Activated B cell treated with CpG ODN at 0.5 μM for 24 hours (primary cell): ENCODE measurements at regions of chrX and their contacts with region 1.

Region 1: GRCh38 chrX:153927922-153928760 is 2.1 kb upstream of the ARHGAP4 start:
- DNase-seq: peak; percentile 83
- ATAC-seq: peak; percentile 66
- H3K4me3 Mint-ChIP-seq: peak overlapping the region; percentile 87
- H3K27ac Mint-ChIP-seq: peak overlapping the region; percentile 96
- H3K4me1 Mint-ChIP-seq: peaks cover 46% of the 10 kb centered on the region
- H3K27me3 Mint-ChIP-seq: no peaks in the 10 kb centered on the region
- CTCF ChIP-seq: no peak

Region 2: DNA sequence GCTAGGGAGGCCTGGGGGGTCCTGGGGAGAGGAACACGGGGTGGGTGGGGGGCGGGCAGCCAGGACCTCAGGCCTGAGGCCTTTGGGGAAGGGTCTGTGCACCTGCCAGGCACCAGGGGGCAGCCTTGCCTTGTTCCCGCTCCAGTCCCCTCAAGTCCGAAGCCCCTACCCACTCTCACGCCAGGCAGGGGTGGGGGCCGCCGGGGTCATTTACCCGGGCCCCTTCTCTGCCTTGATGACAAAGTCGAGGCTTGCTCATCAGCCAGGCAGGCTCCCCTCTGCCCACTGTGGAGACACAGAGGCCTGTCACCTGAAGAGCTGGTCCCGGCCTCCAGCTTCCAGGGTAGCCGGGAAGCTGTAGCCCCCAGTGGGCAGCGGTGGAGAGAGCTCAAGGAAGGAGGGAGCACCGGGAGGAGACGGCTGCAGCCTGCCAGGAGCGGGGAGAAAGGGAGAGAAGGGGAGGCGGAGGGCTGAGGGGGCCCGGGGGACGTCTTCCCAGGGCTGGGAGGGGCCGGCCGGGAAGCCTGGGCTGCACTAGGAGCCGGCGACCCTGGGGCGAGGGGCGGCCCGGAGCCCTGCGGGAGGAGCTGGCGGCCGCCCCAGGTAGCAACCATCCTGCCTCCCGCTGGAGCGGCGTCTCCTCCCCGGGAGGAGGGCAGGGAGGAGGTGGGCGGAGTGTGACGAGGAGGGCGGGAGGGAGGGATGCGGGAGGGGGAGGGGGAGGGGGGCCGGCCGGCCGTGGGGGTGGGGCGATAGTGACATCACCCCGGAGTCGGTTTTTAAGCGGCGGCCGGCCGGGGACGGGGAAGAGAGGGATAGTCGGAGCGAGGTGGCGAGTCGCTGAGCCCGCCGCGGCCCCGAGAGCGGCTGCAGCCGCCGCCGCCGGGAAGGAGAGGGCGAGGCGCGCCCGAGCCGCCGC is 240.8 kb before region 1 on chrX and contains the start of gene SLC6A8:
- CTCF ChIA-PET with region 1: no interaction called
- POLR2A ChIA-PET with region 1: no interaction called
- intact Hi-C with region 1: no loop called
- DNase-seq: peak; percentile 34
- ATAC-seq: peak; percentile 68
- H3K4me3 Mint-ChIP-seq: peak within 1 kb of the TSS; percentile 83
- H3K27ac Mint-ChIP-seq: no peak within 1 kb of the TSS
- H3K4me1 Mint-ChIP-seq: no peaks in the 10 kb centered on the region
- H3K27me3 Mint-ChIP-seq: peaks cover 3% of the 10 kb centered on the region
- CTCF ChIP-seq: no peak
- total RNA-seq, gene SLC6A8: 0.81 and 1.2 TPM in 2 replicates

Region 3: GRCh38 chrX:153794018-153794896 is 133.9 kb before region 1 on chrX and contains the starts of genes IDH3G and SSR4:
- CTCF ChIA-PET with region 1: no interaction called
- POLR2A ChIA-PET with region 1: interaction called, 52 read pairs
- intact Hi-C with region 1: loop called (anchors 1 kb)
- DNase-seq: peak; percentile 84
- ATAC-seq: peak; percentile 91
- H3K4me3 Mint-ChIP-seq: peak within 1 kb of the TSS; percentile 94
- H3K27ac Mint-ChIP-seq: peak within 1 kb of the TSS; percentile 92
- H3K4me1 Mint-ChIP-seq: peaks cover 19% of the 10 kb centered on the region
- H3K27me3 Mint-ChIP-seq: no peaks in the 10 kb centered on the region
- CTCF ChIP-seq: no peak
- total RNA-seq, gene IDH3G: 58.5 and 60.3 TPM in 2 replicates
- total RNA-seq, gene SSR4: 160 and 175 TPM in 2 replicates

Region 4: DNA sequence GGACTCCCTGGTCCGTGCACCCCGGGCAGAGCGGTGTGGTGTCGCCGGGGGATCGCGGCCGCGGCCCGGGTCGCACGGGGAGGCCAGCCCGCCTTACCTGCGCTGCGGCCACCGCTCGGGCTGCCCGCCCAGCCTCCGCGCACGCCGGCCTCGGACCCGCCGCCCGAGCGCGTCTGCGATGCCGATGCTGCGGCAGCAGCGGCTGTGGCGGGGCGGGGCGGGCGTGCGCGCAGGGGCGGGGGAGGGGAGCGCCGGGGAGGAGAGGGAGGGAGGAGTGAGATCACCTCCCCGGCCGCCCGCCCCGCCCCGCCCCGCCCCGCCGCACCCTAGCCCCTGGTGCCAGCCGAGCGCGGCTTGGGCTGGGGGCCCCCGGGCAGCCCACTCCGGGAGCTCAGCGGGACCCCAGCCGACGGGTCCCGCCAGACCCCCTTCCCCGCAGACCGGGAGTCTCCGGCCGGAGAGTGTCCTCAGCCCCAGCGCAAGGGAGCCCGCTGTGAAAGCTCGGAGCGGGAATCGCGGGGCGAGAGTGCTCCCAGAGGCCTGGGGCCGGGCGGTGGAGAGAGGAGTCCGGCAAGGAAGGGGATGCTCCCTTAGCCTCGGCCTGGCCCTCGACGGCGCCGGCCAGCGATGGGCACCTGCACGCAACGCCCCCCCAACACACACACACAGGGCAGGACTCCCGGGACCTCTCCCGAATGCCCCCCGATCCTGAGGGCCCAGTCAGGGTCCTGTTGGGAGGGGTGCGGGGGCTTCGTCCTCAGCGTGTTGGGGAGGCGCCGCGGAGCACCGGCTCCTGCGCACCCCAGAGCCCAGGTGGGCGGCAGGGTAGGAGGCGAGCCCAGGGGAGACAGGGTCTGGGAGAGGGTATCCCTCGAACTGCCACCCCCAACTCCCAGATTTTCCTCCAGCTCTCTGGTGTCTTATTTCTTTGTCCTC is 41.9 kb before region 1 on chrX and contains the start of gene L1CAM:
- CTCF ChIA-PET with region 1: no interaction called
- POLR2A ChIA-PET with region 1: interaction called, 6 read pairs
- intact Hi-C with region 1: loop called (anchors 1 kb)
- DNase-seq: no peak
- ATAC-seq: peak; percentile 20
- H3K4me3 Mint-ChIP-seq: peak within 1 kb of the TSS; percentile 65
- H3K27ac Mint-ChIP-seq: peak within 1 kb of the TSS; percentile 35
- H3K4me1 Mint-ChIP-seq: peaks cover 29% of the 10 kb centered on the region
- H3K27me3 Mint-ChIP-seq: no peaks in the 10 kb centered on the region
- CTCF ChIP-seq: no peak
- total RNA-seq, gene L1CAM: 7.3 and 11.0 TPM in 2 replicates

Region 5: DNA sequence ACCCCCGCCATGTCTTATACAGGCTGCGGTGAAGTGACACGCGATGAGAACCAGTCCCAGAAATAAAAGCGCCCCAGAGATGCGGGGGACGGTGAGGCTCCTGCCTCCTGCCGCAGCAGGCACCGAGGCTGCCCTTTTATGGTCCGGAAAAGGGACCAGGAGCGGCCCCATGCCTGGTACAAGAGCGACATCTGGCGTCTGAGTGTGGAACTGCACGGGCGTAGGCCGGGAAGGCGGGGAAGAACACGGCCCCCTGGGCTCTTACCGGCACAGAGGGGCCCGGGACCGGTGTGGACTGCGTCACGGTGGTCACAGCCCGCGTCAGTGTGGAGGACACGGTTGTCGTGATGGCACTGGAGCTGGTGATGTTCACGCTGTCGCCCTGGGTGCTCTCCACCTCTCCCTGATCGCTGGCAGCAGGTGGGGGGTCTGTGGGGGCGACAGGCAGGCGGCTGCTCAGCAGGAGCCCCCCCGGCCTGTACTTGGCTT is 25.2 kb after region 1 on chrX:
- CTCF ChIA-PET with region 1: interaction called, 146 read pairs
- POLR2A ChIA-PET with region 1: interaction called, 305 read pairs
- intact Hi-C with region 1: loop called (anchors 1 kb)
- DNase-seq: peak; percentile 68
- ATAC-seq: peak; percentile 88
- H3K4me3 Mint-ChIP-seq: no peak overlapping the region
- H3K27ac Mint-ChIP-seq: peak overlapping the region; percentile 46
- H3K4me1 Mint-ChIP-seq: peaks cover 2% of the 10 kb centered on the region
- H3K27me3 Mint-ChIP-seq: no peaks in the 10 kb centered on the region
- CTCF ChIP-seq: no peak

Region 6: DNA sequence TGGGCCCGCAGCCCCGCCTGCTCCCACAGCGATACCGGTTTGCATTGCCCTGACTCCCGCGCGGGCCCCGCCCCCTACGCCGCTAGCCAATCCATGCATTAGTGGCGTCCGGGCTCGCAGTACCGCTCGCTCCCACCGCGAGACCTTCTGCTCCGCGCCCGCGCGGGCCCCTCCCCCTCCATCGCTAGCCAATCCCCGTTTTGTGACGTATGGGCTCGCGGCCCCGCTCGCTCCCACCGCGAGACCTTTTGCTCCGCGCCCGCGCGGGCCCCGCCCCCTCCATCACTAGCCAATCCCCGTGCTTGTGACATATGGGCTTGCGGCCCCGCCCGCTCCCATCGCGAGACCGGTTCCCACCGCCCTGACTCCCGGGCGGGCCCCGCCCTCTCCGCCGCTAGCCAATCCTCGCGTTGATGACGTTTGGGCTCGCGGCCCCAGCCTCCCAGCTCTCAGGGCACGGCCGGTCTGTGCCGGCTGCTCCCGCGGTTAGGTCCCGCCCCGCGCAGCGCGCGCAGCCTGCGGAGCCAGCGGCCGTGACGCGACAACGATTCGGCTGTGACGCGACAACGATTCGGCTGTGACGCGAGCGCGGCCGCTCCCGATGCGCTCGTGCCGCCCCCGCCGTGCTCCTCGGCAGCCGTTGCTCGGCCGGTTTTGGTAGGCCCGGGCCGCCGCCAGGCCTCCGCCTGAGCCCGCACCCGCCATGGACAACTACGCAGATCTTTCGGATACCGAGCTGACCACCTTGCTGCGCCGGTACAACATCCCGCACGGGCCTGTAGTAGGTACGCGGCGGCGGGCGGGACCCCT is 450.8 kb after region 1 on chrX and contains the start of gene EMD:
- CTCF ChIA-PET with region 1: no interaction called
- POLR2A ChIA-PET with region 1: interaction called, 4 read pairs
- intact Hi-C with region 1: loop called (anchors 1 kb)
- DNase-seq: peak; percentile 87
- ATAC-seq: peak; percentile 83
- H3K4me3 Mint-ChIP-seq: peak within 1 kb of the TSS; percentile 83
- H3K27ac Mint-ChIP-seq: peak within 1 kb of the TSS; percentile 83
- H3K4me1 Mint-ChIP-seq: peaks cover 18% of the 10 kb centered on the region
- H3K27me3 Mint-ChIP-seq: no peaks in the 10 kb centered on the region
- CTCF ChIP-seq: no peak
- total RNA-seq, gene EMD: 68.4 and 70.2 TPM in 2 replicates

Region 7: DNA sequence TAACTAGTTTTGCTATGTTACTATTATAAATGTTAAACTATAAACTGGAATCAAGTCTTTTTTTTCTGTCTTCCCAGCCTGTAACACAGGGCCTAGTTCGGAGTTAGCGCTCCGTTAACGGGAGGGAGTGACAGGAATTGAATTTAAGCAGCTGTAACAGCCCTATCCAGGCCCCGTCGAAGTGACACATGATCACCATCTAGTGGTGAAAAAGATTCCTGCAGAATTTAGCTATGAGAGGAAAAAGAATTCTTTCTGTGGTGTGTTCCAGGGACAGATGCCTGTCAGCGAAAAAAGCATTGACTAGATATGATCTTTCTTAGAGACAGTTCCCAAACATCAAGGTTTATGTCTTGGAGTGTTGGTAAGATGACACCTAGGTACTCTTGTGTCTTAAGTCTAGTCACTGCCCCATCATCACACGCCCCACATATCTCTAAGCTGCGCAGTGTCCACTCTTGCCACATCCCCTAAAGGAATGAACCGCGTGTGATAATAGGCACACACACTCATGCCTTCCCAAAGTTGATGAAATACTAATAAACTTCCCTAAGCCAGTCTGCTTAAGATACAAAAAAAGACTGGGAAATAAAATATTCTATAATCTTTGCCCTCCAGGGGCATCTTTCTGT is 820.7 kb after region 1 on chrX:
- CTCF ChIA-PET with region 1: no interaction called
- POLR2A ChIA-PET with region 1: no interaction called
- intact Hi-C with region 1: no loop called
- DNase-seq: no peak
- ATAC-seq: peak; percentile 51
- H3K4me3 Mint-ChIP-seq: no peak overlapping the region
- H3K27ac Mint-ChIP-seq: no peak overlapping the region
- H3K4me1 Mint-ChIP-seq: peaks cover 21% of the 10 kb centered on the region
- H3K27me3 Mint-ChIP-seq: no peaks in the 10 kb centered on the region
- CTCF ChIP-seq: peak; percentile 31